ENCODE measurements at regions of chr13 and their contacts with region 1.

Region 1: DNA sequence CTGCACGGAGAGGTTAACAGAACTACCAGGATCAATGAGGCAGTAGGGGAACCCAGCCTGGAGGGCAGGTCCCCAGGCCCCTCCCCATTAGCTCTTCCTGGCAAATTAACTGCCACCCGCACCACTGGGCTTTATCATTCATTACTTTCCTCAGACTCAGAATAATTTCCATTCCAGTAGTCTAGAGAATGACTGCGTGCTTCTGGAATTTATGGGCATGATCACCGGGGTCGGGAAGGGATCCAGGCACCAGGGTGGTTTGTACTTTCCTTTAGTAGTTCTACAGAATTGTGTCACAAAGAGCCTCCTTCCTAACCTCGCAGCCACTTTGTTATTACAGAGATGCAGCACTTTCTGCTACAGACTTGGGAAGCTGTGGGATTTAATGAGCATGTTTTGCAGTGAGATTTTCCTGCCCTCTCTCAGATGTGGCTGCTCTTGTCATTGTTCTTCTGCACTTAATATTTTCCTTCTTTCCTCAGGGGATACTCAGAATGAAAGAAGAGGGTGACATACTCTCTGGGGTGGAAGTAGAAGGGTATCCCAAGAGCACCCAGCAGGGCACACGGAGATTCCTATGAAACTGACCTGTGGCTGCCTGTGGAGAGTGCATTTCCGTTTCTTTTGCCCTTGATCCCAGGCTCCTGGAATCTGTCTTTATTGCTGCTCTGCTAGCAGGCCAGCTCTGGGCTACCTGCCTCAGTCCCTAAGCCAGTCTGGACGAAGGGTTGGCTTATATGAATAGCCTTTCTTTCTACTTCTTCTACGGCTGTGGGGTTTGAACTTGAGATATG is 285.0 kb upstream of the SLC10A2 start:
- DNase-seq: peak in 3 of 5 donors; percentile 8 to 41 (median 23)
- ATAC-seq: peak; percentile 29 to 83 (median 74)
- H3K4me3 ChIP-seq: peak overlapping the region in 3 of 12 donors; percentile 1 to 18 (median 17)
- H3K27ac ChIP-seq: peak overlapping the region in 11 of 12 donors; percentile 8 to 73 (median 52)
- H3K4me1 ChIP-seq: peaks cover 0 to 23% (median 10%) of the 10 kb centered on the region in 12 donors
- H3K27me3 ChIP-seq: no peaks in the 10 kb centered on the region
- CTCF ChIP-seq: no peak
- POLR2A ChIP-seq: no peak

Region 2: GRCh38 chr13:103203735-103204330 is 147.4 kb before region 1 on chr13:
- intact Hi-C with region 1: loop called in 1 of 10 experiments (anchors 10 kb)
- DNase-seq: no peak
- ATAC-seq: no peak
- H3K4me3 ChIP-seq: no peak overlapping the region
- H3K27ac ChIP-seq: no peak overlapping the region
- H3K4me1 ChIP-seq: peaks cover 0 to 12% (median 0%) of the 10 kb centered on the region in 12 donors
- H3K27me3 ChIP-seq: no peaks in the 10 kb centered on the region
- CTCF ChIP-seq: no peak
- POLR2A ChIP-seq: no peak

Region 3: GRCh38 chr13:103694033-103694432 is 342.8 kb after region 1 on chr13:
- intact Hi-C with region 1: loop called in 1 of 10 experiments (anchors 10 kb)
- DNase-seq: no peak
- ATAC-seq: no peak
- H3K4me3 ChIP-seq: no peak overlapping the region
- H3K27ac ChIP-seq: no peak overlapping the region
- H3K4me1 ChIP-seq: no peaks in the 10 kb centered on the region
- H3K27me3 ChIP-seq: no peaks in the 10 kb centered on the region
- CTCF ChIP-seq: no peak
- POLR2A ChIP-seq: no peak

Measured in heart left ventricle (tissue), 16 donors.